ENCODE measurements at regions of chr22 and their contacts with region 1.

Region 1: DNA sequence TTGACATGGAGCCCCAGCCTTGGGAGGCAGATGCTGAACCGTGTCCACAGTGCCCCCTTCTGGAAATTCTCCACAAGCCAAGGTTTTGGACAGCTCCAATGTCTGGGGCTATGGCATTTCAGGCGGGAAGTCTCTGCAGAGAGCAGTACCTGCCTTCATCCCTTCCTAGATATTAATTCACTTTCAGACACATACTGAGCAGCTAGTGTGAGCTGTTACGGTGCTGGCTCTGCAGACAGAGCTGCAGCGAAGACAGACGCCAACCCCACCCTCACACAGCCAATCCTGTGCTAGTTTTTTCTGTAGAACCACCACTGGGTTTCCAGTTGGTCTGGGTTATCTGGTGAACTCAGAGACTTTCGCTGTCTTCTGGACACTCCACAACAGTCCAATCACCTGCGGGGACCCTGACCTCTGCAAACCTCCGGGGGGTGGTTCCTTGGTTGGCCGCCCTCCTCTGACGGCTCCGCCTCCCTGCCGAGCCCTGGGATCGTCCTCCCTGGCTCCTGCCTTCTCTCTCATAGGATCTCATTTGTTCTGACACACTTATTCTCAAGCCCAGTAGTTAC is 9.1 kb downstream of the LMF2 start:
- DNase-seq: peak; percentile 35 to 81 (median 64)
- H3K4me3 ChIP-seq: no peak overlapping the region
- H3K4me3 Mint-ChIP-seq: no peak overlapping the region
- H3K27ac ChIP-seq: no peak overlapping the region
- H3K27ac Mint-ChIP-seq: peak overlapping the region in 1 of 8 donors; percentile 56
- H3K4me1 ChIP-seq: peaks cover 9% of the 10 kb centered on the region
- H3K4me1 Mint-ChIP-seq: peaks cover 0 to 4% (median 3%) of the 10 kb centered on the region in 3 donors
- H3K27me3 ChIP-seq: no peaks in the 10 kb centered on the region
- H3K27me3 Mint-ChIP-seq: no peaks in the 10 kb centered on the region

Region 2: GRCh38 chr22:50244420-50245213 is 253.8 kb before region 1 on chr22 and contains the start of gene TUBGCP6:
- CTCF ChIA-PET with region 1: interaction called, 11 read pairs
- POLR2A ChIA-PET with region 1: no interaction called
- DNase-seq: peak; percentile 89 to 92 (median 90)
- H3K4me3 ChIP-seq: peak within 1 kb of the TSS; percentile 77
- H3K4me3 Mint-ChIP-seq: peak within 1 kb of the TSS; percentile 84 to 100 (median 98)
- H3K27ac ChIP-seq: peak within 1 kb of the TSS; percentile 99
- H3K27ac Mint-ChIP-seq: peak within 1 kb of the TSS; percentile 94 to 100 (median 98)
- H3K4me1 ChIP-seq: peaks cover 54% of the 10 kb centered on the region
- H3K4me1 Mint-ChIP-seq: peaks cover 34 to 66% (median 41%) of the 10 kb centered on the region in 3 donors
- H3K27me3 ChIP-seq: no peaks in the 10 kb centered on the region
- H3K27me3 Mint-ChIP-seq: peaks cover 0 to 1% of the 10 kb centered on the region in 2 donors
- total RNA-seq, gene TUBGCP6: 51.4 to 52.2 TPM

Region 3: DNA sequence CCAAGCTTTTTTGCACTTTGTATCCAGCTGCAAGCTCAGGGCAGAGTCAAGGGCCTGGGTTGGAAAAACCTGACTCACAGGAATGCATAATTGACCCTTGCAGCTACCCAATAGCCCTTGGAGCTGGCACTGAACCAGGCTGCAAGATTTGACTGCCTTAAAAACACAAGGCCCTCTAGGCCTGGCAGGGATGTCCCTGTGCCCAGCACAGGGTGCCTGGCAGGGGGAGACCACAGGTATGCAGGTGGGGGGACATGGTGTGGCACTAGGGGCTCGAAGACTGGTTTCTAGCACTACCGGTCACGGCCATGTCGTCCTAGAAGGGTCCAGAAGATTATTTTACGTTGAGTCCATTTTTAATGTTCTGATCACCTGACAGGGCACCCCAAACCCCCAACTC is 53.7 kb before region 1 on chr22:
- CTCF ChIA-PET with region 1: interaction called, 11 read pairs
- POLR2A ChIA-PET with region 1: no interaction called
- DNase-seq: no peak
- H3K4me3 ChIP-seq: no peak overlapping the region
- H3K4me3 Mint-ChIP-seq: peak overlapping the region in 4 of 7 donors; percentile 45 to 62 (median 55)
- H3K27ac ChIP-seq: no peak overlapping the region
- H3K27ac Mint-ChIP-seq: peak overlapping the region in 7 of 8 donors; percentile 63 to 95 (median 84)
- H3K4me1 ChIP-seq: peaks cover 19% of the 10 kb centered on the region
- H3K4me1 Mint-ChIP-seq: peaks cover 25 to 40% (median 27%) of the 10 kb centered on the region in 3 donors
- H3K27me3 ChIP-seq: no peaks in the 10 kb centered on the region
- H3K27me3 Mint-ChIP-seq: no peaks in the 10 kb centered on the region

Region 4: DNA sequence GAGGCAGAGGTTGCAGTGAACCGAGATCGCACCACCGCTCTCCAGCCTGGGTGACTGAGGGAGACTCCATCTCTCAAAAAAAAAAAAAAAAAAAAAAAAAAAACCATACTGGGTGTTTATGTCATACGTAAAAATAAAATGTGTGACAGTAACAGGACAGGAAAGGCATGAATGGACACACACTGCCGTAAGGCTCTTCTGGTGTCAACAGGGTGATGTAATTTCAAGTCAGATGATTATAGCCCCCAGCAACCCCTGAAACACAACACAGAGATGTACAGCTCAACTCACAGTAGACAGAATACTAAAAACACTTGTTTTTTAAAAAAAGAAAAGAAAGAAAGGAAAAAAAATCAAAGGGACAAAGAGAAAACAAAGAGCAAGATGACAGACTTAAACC is 45.8 kb before region 1 on chr22:
- CTCF ChIA-PET with region 1: interaction called, 12 read pairs
- POLR2A ChIA-PET with region 1: no interaction called
- DNase-seq: no peak
- H3K4me3 ChIP-seq: no peak overlapping the region
- H3K4me3 Mint-ChIP-seq: peak overlapping the region in 1 of 7 donors; percentile 49
- H3K27ac ChIP-seq: no peak overlapping the region
- H3K27ac Mint-ChIP-seq: peak overlapping the region; percentile 31 to 93 (median 58)
- H3K4me1 ChIP-seq: no peaks in the 10 kb centered on the region
- H3K4me1 Mint-ChIP-seq: peaks cover 12 to 18% (median 16%) of the 10 kb centered on the region in 3 donors
- H3K27me3 ChIP-seq: no peaks in the 10 kb centered on the region
- H3K27me3 Mint-ChIP-seq: no peaks in the 10 kb centered on the region

Region 5: DNA sequence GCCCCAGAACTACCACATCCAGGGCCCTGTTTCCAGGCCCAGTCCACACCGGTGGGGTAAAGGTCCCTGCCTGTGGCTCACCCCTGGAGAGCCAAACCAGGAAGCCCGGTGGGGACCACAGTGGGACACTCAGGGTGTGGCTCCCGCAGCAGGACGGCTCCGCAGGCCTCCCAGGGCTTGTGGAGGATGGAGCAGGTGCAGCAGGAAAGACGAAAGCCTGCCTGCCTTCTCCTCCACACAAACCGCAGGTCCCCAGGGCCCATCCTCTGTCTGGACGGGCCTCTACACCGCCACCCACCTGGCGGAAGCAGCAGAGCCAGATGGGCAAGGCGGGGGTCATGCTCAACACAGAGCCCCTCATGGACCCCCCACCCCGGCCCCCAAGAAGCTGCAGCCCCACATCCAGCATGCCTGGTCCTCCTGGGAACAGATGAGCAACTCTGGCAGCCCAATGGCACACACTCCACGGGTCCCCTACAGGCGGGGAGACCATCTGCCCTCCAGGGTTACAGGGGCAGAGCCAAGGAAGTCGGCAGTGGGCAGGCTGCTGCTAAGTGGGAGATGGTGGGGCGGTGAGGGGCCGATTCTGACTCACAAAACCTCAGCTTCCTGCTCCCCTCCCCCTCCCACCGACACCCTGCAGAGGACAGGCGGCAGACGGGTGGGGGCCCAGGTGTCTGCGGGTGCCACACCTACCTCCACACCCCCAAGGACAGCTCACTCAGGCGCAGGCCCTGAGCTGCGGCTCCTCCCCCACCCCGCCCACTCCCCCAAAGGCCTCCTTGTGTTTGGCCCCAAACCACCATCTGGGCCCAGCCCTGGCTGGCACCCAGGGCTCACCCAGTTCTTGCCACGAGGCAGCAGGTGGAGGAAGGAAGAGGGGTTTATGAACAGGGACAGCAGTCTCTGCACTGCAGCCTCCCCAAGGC is 28.8 kb before region 1 on chr22:
- CTCF ChIA-PET with region 1: interaction called, 19 read pairs
- POLR2A ChIA-PET with region 1: interaction called, 8 read pairs
- DNase-seq: peak; percentile 97 to 100 (median 98)
- H3K4me3 ChIP-seq: peak overlapping the region; percentile 63
- H3K4me3 Mint-ChIP-seq: peak overlapping the region; percentile 79 to 98 (median 83)
- H3K27ac ChIP-seq: peak overlapping the region; percentile 51
- H3K27ac Mint-ChIP-seq: peak overlapping the region; percentile 78 to 99 (median 97)
- H3K4me1 ChIP-seq: peaks cover 59% of the 10 kb centered on the region
- H3K4me1 Mint-ChIP-seq: peaks cover 60 to 78% (median 64%) of the 10 kb centered on the region in 3 donors
- H3K27me3 ChIP-seq: no peaks in the 10 kb centered on the region
- H3K27me3 Mint-ChIP-seq: no peaks in the 10 kb centered on the region

Region 6: DNA sequence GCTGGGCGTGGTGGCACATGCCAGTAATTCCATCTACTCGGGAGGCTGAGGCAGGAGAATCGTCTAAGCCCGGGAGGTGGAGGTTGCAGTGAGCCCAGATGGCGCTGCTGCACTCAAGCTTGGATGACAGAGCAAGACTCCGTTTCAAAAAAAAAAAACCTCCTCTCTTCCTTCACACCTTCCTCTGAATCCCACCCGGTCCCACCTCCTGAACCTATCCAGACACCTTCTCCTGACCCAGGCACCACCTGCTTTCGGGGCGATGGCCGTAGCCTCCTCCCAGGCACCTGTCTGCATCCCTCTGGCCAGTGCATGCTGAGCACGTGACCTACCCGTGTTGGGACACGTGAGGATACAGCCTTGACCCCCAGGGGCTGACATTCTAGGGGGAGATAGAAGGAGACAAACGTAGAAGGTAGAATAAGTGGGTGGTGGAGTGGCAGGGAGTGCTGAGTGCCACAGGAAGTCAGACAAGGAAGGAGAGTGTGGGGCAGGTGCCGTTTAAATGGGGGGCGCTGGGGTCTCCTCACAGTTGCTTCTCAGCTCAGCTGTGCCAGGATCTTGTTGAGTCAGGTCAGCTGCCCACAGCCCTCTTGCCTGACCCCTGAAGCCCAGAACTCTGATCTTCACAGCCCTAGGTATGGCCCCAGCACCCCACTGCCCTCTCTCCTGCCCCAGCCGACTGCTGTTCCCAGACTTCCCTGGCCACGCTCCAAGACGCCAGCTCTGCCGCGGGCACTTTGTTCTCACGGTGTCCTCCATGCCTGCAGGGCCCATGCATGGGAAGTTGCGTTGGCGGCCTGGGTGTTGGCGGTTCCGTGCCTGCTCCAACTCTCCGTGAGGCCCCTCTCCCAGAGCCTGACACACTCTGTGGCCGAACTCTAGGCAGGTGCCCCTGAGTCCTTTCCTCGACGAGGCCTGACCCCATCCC is 12.9 kb before region 1 on chr22:
- CTCF ChIA-PET with region 1: interaction called, 11 read pairs
- POLR2A ChIA-PET with region 1: no interaction called
- DNase-seq: no peak
- H3K4me3 ChIP-seq: no peak overlapping the region
- H3K4me3 Mint-ChIP-seq: no peak overlapping the region
- H3K27ac ChIP-seq: no peak overlapping the region
- H3K27ac Mint-ChIP-seq: peak overlapping the region in 1 of 8 donors; percentile 30
- H3K4me1 ChIP-seq: peaks cover under 1% of the 10 kb centered on the region
- H3K4me1 Mint-ChIP-seq: no peaks in the 10 kb centered on the region
- H3K27me3 ChIP-seq: no peaks in the 10 kb centered on the region
- H3K27me3 Mint-ChIP-seq: peaks cover 4 to 11% of the 10 kb centered on the region in 2 donors

Region 7: DNA sequence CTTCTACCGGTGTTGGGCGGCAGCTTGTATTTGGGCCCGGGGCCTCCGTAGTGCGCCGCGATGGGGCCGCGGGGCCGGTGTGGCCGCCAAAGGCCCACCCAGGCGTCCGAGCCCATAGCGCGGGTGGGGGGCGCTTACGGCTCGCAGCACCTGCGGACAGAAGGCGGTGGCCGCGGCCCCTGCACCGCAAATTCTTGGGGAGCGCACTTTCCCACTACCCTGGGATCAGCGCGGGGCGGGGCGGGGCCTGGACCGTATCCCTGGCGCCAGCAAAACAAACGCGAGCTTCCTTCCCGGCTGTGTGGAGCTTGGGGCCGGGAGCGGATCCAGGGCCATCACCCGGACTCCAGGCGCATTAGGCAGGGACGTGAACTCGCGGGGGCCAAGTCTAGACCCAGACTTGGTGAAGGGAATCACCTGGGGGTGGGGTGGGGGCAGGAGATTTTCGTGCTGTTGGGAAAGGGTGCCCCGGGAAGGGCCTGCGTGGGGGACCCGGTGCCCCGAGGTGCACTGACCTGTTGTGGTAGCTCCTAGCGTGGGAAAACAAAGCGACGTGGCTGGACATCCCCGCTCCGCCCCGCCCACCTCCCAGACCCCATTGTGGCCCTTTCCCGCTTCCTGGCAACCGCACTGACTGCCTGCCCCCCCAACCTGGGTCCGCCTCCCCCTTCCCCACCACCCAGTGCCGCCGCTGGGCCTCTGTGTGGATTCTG is 33.7 kb after region 1 on chr22:
- CTCF ChIA-PET with region 1: no interaction called
- POLR2A ChIA-PET with region 1: no interaction called
- DNase-seq: peak in 1 of 5 donors; percentile 50
- H3K4me3 ChIP-seq: peak overlapping the region; percentile 84
- H3K4me3 Mint-ChIP-seq: peak overlapping the region; percentile 71 to 94 (median 92)
- H3K27ac ChIP-seq: peak overlapping the region; percentile 92
- H3K27ac Mint-ChIP-seq: peak overlapping the region; percentile 65 to 99 (median 98)
- H3K4me1 ChIP-seq: peaks cover 15% of the 10 kb centered on the region
- H3K4me1 Mint-ChIP-seq: peaks cover 19 to 29% (median 21%) of the 10 kb centered on the region in 3 donors
- H3K27me3 ChIP-seq: no peaks in the 10 kb centered on the region
- H3K27me3 Mint-ChIP-seq: no peaks in the 10 kb centered on the region